Left ventricle myocardium inferior (tissue), 1 donor: ENCODE measurements at regions of chr14 and their contacts with region 1.

Region 1: GRCh38 chr14:50321009-50321660 is 9.0 kb downstream of the DMAC2L start:
- DNase-seq: peak; percentile 24
- H3K4me3 ChIP-seq: peak overlapping the region; percentile 36
- H3K27ac ChIP-seq: peak overlapping the region; percentile 73
- H3K4me1 ChIP-seq: peaks cover 24% of the 10 kb centered on the region
- H3K27me3 ChIP-seq: no peaks in the 10 kb centered on the region
- CTCF ChIP-seq: peak; percentile 94

Region 2: GRCh38 chr14:50396631-50397390 is 75.7 kb after region 1 on chr14 and contains the start of gene CDKL1:
- intact Hi-C with region 1: loop called (anchors 10 kb)
- DNase-seq: peak; percentile 71
- H3K4me3 ChIP-seq: peak within 1 kb of the TSS; percentile 80
- H3K27ac ChIP-seq: peak within 1 kb of the TSS; percentile 79
- H3K4me1 ChIP-seq: peaks cover 32% of the 10 kb centered on the region
- H3K27me3 ChIP-seq: no peaks in the 10 kb centered on the region
- CTCF ChIP-seq: no peak
- total RNA-seq, gene CDKL1: 1.3 TPM

Region 3: GRCh38 chr14:50531595-50532501 is 210.7 kb after region 1 on chr14:
- intact Hi-C with region 1: loop called (anchors 2 kb)
- DNase-seq: peak; percentile 42
- H3K4me3 ChIP-seq: peak overlapping the region; percentile 90
- H3K27ac ChIP-seq: peak overlapping the region; percentile 92
- H3K4me1 ChIP-seq: peaks cover 40% of the 10 kb centered on the region
- H3K27me3 ChIP-seq: no peaks in the 10 kb centered on the region
- CTCF ChIP-seq: no peak